ENCODE measurements at regions of chr14 and their contacts with region 1.

Region 1: DNA sequence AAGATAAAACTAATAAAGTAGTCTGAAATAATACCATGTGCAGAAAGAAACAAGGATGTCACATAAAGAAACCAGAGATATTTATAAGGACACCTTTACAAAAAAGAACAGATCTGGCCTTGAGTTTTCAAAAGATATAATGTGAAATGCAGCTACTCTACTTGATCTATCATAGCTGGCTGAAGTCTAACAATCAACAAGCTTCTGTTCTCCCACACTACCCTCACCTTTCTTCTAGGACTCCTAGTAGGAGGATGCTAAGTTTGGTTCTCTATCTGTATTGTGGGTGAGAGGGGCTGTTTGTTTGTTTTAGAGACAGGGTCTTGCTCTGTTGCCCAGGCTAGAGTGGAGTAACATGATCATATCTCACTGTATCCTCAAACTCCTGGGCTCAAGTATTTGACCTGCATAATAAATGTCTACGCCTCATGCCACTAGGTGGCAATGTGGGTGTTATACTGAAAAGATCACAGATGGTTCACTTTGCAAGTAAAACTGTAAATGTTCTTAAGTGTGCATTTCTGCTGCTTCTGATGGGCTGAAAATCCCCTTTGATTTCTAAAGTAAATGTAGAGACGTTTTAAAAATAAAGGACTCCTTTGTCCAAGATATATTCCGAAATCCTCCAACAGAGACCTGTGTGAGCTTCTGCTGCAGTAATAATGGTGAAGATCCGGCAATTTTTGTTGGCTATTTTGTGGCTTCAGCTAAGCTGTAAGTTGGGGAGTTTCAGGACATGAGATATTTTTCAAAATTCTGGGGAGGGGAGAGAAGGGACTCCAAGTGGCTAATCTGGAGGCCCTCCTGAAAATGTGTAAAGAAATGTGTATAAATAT is 269.3 kb downstream of the DAD1 start:
- DNase-seq: peak; percentile 62
- H3K4me3 Mint-ChIP-seq: no peak overlapping the region
- H3K27ac Mint-ChIP-seq: no peak overlapping the region
- H3K4me1 Mint-ChIP-seq: peaks cover 6% of the 10 kb centered on the region
- H3K27me3 Mint-ChIP-seq: peaks cover 13% of the 10 kb centered on the region
- CTCF ChIP-seq: peak; percentile 68

Region 2: GRCh38 chr14:22185191-22185590 is 134.6 kb before region 1 on chr14:
- CTCF ChIA-PET with region 1: no interaction called
- POLR2A ChIA-PET with region 1: no interaction called
- intact Hi-C with region 1: no loop called
- DNase-seq: peak; percentile 13
- H3K4me3 Mint-ChIP-seq: no peak overlapping the region
- H3K27ac Mint-ChIP-seq: no peak overlapping the region
- H3K4me1 Mint-ChIP-seq: no peaks in the 10 kb centered on the region
- H3K27me3 Mint-ChIP-seq: peaks cover 4% of the 10 kb centered on the region
- CTCF ChIP-seq: no peak

Region 3: DNA sequence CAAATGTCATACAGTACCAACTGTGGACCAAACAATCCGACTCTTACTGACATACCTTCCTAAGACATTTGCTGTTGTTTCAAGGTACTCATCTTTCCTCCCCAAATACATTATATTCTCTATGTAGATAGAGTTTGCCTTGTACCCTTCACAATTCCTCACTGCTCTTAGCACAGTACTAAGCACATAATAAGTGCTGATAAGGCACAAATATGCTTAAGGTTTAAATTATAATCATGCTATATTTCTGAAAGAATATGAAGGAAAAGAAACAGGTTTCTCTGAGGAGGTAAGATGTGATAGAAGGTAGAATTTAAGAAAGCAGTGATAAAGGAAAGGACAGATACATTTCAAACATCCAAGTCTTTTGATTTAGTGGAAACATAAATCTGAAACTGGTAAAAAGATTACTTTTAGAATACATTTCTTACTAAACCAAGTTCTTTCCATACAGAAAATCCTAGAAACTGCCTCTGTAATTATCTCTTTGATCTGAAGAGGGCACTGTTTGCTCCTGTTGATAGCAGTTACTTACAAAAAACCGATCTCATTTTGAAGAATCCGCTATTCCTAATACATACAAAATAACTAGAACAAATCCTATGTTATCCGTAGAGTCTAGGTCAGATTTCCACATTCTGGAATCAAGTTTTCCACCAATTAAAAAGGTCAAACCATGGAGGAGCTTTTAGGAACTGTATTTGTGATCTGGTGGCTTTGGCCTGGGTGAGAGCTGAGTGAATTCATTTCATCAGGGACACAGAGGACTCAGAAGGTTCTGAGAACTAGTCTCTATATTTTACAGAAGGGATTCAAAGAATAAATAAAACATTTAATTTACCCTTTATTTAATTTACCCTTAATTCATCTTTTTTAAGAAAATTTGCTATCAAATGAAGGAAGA is 42.6 kb before region 1 on chr14:
- CTCF ChIA-PET with region 1: interaction called, 14 read pairs
- POLR2A ChIA-PET with region 1: no interaction called
- intact Hi-C with region 1: no loop called
- DNase-seq: peak; percentile 34
- H3K4me3 Mint-ChIP-seq: no peak overlapping the region
- H3K27ac Mint-ChIP-seq: no peak overlapping the region
- H3K4me1 Mint-ChIP-seq: no peaks in the 10 kb centered on the region
- H3K27me3 Mint-ChIP-seq: peaks cover 48% of the 10 kb centered on the region
- CTCF ChIP-seq: peak; percentile 55

Region 4: GRCh38 chr14:22303589-22304195 is 16.1 kb before region 1 on chr14:
- CTCF ChIA-PET with region 1: interaction called, 13 read pairs
- POLR2A ChIA-PET with region 1: interaction called, 3 read pairs
- intact Hi-C with region 1: no loop called
- DNase-seq: peak; percentile 15
- H3K4me3 Mint-ChIP-seq: no peak overlapping the region
- H3K27ac Mint-ChIP-seq: no peak overlapping the region
- H3K4me1 Mint-ChIP-seq: no peaks in the 10 kb centered on the region
- H3K27me3 Mint-ChIP-seq: no peaks in the 10 kb centered on the region
- CTCF ChIP-seq: peak; percentile 52

Region 5: DNA sequence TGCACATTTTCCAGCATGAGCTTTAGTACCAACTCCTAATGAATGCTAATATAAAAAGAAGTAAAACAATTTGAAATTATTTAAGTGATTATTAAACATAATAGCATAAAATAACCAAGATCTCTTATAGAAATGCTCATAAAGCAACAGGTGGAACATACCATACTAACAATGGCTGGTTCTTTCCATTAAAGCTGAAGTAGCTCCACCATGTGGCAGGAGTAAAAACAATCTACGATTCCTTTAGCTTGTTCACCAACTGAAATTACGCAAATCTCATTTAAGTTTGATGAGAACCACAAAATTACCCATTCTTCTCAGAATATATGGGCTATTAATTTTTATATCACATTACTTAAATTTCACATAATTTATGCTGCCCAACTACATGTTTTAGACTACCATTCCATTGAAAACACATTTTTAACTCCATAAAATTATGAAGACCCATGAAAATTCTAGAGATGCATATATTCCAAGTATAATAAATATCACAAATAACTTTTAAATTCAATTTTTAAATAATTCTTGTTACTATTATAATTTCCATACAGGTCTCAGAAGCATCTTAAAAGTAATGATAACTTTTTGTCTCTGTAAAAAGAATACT is 55.7 kb after region 1 on chr14:
- CTCF ChIA-PET with region 1: interaction called, 294 read pairs
- POLR2A ChIA-PET with region 1: interaction called, 24 read pairs
- intact Hi-C with region 1: loop called (anchors 1 kb)
- DNase-seq: peak; percentile 63
- H3K4me3 Mint-ChIP-seq: no peak overlapping the region
- H3K27ac Mint-ChIP-seq: no peak overlapping the region
- H3K4me1 Mint-ChIP-seq: peaks cover 9% of the 10 kb centered on the region
- H3K27me3 Mint-ChIP-seq: peaks cover 20% of the 10 kb centered on the region
- CTCF ChIP-seq: peak; percentile 69

Region 6: DNA sequence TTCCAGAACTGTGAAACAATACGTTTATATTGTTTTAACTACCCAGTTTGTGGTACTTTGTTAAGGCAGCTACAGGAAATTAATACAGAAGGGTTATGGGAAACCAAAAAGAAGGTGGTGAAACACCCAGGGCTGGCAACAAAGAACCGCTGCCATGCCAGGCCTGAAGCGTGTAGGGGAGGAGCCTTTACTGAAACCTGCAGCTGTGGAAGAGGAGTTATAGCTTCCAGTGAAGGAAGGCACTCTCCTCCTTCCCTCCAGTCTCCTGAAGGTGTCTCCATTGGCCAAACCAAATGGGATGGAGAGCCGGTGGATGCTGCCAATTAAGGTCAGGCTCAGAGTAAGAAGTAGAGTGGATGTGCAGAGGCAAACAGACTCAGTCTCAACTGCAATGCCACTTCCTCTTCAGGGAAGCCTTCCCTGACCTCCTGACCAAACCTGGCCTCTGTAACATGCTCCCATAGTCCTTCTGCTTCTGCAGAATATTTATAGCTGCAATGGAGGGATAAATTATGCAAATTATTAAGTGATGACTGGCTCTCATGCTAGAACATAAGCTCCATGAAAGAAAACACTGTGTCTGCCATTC is 100.9 kb after region 1 on chr14:
- CTCF ChIA-PET with region 1: interaction called, 10 read pairs
- POLR2A ChIA-PET with region 1: no interaction called
- intact Hi-C with region 1: no loop called
- DNase-seq: peak; percentile 28
- H3K4me3 Mint-ChIP-seq: no peak overlapping the region
- H3K27ac Mint-ChIP-seq: no peak overlapping the region
- H3K4me1 Mint-ChIP-seq: no peaks in the 10 kb centered on the region
- H3K27me3 Mint-ChIP-seq: peaks cover 11% of the 10 kb centered on the region
- CTCF ChIP-seq: no peak